Astrocyte of the cerebellum (primary cell): ENCODE measurements at regions of chr5 and their contacts with region 1.

Region 1: GRCh38 chr5:91957666-91958065 is 574.5 kb upstream of the ARRDC3 start:
- DNase-seq: no peak
- H3K4me3 ChIP-seq: no peak overlapping the region
- CTCF ChIP-seq: no peak

Region 2: GRCh38 chr5:92002721-92003274 is 45.1 kb after region 1 on chr5:
- in situ Hi-C with region 1: loop called (anchors 10 kb)
- DNase-seq: no peak
- H3K4me3 ChIP-seq: no peak overlapping the region
- CTCF ChIP-seq: no peak

Region 3: GRCh38 chr5:92064993-92065392 is 107.3 kb after region 1 on chr5:
- in situ Hi-C with region 1: no loop called
- DNase-seq: no peak
- H3K4me3 ChIP-seq: no peak overlapping the region
- CTCF ChIP-seq: no peak

Region 4: DNA sequence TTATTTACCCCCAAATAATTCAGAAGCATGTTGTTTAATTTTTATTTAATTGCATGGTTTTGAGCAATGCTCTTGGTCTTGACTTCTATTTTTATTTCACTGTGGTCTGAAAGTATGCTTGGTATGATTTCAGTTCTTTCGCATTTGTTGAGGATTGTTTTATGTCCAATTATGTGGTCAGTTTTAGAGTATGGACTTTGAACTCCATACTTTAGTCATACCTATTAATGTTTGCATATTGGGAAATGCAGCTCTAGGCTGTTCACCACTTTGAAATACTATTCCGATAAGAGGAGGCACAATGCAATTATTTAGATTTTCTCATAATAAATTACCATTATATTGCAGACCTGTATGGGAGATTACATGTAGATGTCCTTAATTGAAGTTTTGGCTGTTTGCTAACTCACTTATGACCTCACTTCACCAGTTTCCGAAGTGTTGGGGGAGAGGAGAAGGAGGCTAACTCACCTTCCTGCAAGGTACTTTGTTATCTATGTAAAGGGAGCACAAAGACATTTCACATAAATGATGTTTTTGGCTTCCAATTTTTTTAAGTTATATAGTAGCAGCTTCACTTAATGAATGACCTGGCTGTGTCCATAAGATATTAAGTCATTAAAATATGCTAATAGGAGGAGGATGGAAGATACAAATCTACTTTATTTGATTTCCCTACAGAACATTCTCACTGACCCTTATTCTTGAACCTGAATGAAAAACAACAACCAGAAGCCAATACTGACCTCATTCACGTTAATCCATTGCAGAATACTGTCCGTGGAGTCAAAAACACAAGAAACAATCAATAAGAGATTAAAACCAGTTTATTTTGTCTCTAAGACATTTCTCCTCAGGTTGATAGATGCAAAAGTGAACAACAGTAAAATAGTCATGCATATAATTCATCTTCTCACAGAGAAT is 395.7 kb after region 1 on chr5:
- in situ Hi-C with region 1: no loop called
- DNase-seq: peak; percentile 37
- H3K4me3 ChIP-seq: no peak overlapping the region
- CTCF ChIP-seq: no peak